Ascending aorta (tissue), 2 donors: ENCODE measurements at regions of chr3 and their contacts with region 1.

Region 1: GRCh38 chr3:52897130-52898122 is at the start of gene STIMATE:
- DNase-seq: peak; percentile 53 to 93
- H3K4me3 ChIP-seq: peak within 1 kb of the TSS; percentile 68 to 91
- H3K27ac ChIP-seq: peak within 1 kb of the TSS; percentile 80 to 87
- H3K4me1 ChIP-seq: peaks cover 7 to 32% of the 10 kb centered on the region in 2 donors
- H3K27me3 ChIP-seq: no peaks in the 10 kb centered on the region
- CTCF ChIP-seq: no peak
- total RNA-seq, gene STIMATE: 18.9 TPM

Region 2: GRCh38 chr3:52742418-52743041 is 154.9 kb before region 1 on chr3:
- intact Hi-C with region 1: no loop called
- DNase-seq: no peak
- H3K4me3 ChIP-seq: no peak overlapping the region
- H3K27ac ChIP-seq: no peak overlapping the region
- H3K4me1 ChIP-seq: no peaks in the 10 kb centered on the region
- H3K27me3 ChIP-seq: no peaks in the 10 kb centered on the region
- CTCF ChIP-seq: peak; percentile 47 to 64 (median 51)

Region 3: GRCh38 chr3:52770496-52771333 is 126.7 kb before region 1 on chr3 and contains the start of gene NEK4:
- intact Hi-C with region 1: loop called (anchors 2 kb)
- DNase-seq: peak; percentile 55 to 94
- H3K4me3 ChIP-seq: peak within 1 kb of the TSS; percentile 90 to 92
- H3K27ac ChIP-seq: peak within 1 kb of the TSS; percentile 53 to 63
- H3K4me1 ChIP-seq: peaks cover 7 to 8% of the 10 kb centered on the region in 2 donors
- H3K27me3 ChIP-seq: no peaks in the 10 kb centered on the region
- CTCF ChIP-seq: peak; percentile 5 to 23 (median 8)
- total RNA-seq, gene NEK4: 11.4 TPM

Region 4: DNA sequence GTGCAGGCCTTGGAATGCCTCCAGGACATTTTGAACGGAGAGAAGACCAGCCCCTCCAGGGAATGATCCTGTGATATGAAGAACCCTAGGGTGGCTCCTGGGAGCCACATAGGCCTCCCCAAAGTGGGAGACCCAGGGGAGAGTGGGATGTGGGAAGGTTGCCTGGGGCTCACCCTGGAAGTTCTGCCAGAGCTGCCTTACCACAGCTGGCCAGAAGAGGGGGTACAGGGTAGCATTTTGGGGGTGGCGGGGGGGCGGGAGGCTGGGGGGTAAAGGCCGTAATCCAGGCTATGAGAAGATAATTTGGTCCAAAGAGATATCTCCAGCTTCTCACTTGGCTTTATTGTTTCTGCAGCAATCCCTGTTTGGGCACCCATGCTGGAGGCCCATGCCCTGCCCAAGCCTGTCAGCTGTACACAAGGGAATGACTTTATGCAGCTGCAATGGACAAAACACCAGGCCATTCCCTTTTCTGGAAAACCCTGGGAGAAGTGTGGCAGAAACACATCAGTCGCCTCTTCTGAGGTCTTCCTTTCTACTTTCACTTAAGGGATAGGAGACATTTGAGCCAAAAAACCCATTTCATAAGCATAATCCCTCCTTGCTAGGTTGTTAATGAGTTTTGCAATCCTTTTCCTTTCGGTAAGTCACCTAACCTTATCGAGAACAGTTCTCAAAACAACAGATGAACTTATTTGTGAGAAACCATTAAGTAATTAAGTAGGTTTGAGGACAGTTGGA is 51.6 kb before region 1 on chr3:
- intact Hi-C with region 1: loop called (anchors 2 kb)
- DNase-seq: no peak
- H3K4me3 ChIP-seq: no peak overlapping the region
- H3K27ac ChIP-seq: peak overlapping the region; percentile 89 to 92
- H3K4me1 ChIP-seq: peaks cover 11 to 29% of the 10 kb centered on the region in 2 donors
- H3K27me3 ChIP-seq: no peaks in the 10 kb centered on the region
- CTCF ChIP-seq: peak in 2 of 3 experiments; percentile 43 to 47